Posterior cingulate gyrus (tissue), 11 donors: ENCODE measurements at regions of chr19 and their contacts with region 1.

Region 1: GRCh38 chr19:55516878-55517620 is 19.9 kb downstream of the SBK2 start:
- DNase-seq: peak; percentile 92 to 99 (median 95)

Region 2: GRCh38 chr19:55605637-55606470 is 88.8 kb after region 1 on chr19 and contains the start of gene ZNF865:
- intact Hi-C with region 1: loop called (anchors 2 kb)
- DNase-seq: peak; percentile 52 to 95 (median 72)

Region 3: DNA sequence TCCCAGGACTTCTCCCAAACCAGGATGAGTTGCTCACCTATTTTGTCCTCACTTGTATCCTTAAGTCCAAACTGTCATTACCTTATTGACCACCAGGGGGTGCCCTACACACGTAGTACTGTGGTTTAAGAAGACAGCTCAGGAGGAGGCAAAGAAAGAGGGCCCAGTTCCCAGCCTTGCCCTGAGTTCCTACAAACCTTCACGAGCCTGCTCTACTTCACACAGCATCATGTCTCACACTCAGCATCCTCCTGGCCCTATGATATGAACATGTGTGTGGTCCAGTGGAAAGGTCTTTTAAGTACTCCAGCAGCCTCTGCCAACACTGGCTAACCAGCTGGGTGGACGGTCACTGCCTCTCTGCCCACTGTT is 115.4 kb after region 1 on chr19:
- intact Hi-C with region 1: loop called (anchors 5 kb)
- DNase-seq: peak in 7 of 10 donors; percentile 74 to 91 (median 81)